Left cardiac atrium (tissue), 4 donors: ENCODE measurements at regions of chr6 and their contacts with region 1.

Region 1: DNA sequence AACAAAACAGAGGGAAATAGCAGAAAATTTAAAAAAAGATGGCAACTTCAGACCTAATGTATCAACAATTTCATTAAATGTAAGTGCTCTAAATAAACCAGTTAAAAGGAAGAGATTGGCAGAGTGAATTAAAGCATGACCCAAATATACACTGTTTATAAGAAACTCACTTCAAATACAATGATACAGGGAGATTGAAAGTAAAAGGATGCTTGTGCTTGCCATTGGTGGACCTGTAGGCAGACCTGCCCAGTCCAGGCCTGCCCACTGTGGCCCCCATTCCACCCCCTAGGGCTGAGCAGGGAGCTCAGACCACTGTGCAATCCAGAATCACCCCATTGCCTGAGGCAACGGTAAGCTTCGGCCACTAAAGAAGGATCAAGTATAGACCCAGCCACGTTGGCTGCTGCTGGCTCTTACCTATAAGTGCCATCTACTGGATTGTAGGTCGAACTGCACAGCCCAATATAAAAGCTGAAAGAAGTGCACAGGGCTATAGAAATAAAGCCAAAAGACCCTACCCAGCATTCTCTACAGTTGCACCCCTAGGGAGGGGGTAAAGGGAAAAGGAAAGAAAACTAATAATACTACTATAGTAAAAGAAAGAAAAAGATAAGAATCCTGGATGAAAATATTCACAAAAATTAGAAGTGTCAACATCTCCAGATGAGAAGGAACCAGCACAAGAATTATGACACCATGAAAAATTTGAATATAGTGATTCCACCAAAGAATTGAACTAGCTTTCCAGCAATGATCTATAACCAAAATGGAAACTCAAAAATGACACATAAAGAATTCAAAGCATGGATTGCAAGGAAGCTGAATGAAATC is 36.1 kb downstream of the PSMB1 start:
- DNase-seq: peak; percentile 42
- ATAC-seq: peak; percentile 53 to 78

Region 2: DNA sequence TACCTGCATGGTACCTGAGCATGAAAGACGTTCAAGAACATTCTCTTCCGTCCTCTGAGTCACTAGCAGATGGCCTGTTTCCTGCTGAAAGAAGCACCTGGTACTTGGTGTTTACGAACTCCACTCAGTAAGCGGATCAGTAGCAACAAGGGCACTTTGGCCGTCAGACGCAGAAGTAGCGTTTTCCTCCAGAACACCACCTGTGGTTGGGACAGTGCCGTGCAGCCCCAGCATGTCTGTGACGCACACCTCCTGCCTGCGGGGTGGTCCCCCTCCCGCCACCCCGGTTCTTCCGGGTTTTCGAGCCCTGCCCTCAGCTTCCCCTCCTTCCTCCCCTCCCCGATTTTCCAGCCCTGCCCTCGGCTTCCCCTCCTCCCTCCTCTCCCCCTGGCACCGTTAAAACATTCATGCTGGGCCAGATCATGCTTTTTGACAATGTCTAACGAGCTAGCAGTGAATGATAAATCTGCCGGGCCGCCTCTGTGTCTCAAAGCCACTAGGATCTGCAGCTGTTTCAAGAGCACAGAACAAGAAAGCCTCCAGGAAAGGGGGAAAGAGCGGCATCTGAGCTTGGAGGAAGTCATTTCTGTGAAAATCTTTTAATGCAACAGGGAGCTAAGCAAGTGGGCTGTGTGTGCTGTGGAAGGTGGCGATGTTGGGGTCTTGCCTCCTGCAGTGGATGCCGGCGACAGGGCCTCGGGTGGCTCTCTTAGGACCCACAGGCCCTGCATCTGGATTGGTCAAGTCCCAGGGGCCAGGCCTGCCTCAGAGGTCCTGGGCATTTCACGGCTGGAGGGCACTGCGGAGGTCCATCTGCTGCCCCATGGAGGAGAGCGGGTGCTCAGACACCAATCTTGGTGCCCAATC is 557.6 kb before region 1 on chr6:
- intact Hi-C with region 1: loop called in 1 of 2 experiments (anchors 5 kb)
- DNase-seq: no peak
- ATAC-seq: peak in 1 of 2 donors; percentile 6

Region 3: GRCh38 chr6:170459451-170459850 is 57.5 kb before region 1 on chr6:
- intact Hi-C with region 1: no loop called
- DNase-seq: peak; percentile 55
- ATAC-seq: no peak